Uterus (tissue), 4 donors: ENCODE measurements at regions of chr9 and their contacts with region 1.

Region 1: GRCh38 chr9:134738869-134739659 is 97.5 kb downstream of the COL5A1 start:
- DNase-seq: peak; percentile 80 to 81
- H3K4me3 ChIP-seq: no peak overlapping the region
- H3K27ac ChIP-seq: peak overlapping the region in 1 of 2 donors; percentile 41
- H3K4me1 ChIP-seq: peaks cover 0 to under 1% of the 10 kb centered on the region in 2 donors
- H3K27me3 ChIP-seq: no peaks in the 10 kb centered on the region
- CTCF ChIP-seq: peak; percentile 87 to 96 (median 92)
- POLR2A ChIP-seq: peak in 1 of 2 donors; percentile 9

Region 2: GRCh38 chr9:134455934-134456739 is 282.9 kb before region 1 on chr9:
- intact Hi-C with region 1: loop called (anchors 10 kb)
- DNase-seq: peak; percentile 92 to 95
- H3K4me3 ChIP-seq: peak overlapping the region; percentile 19 to 21
- H3K27ac ChIP-seq: peak overlapping the region; percentile 90 to 94
- H3K4me1 ChIP-seq: peaks cover 10 to 14% of the 10 kb centered on the region in 2 donors
- H3K27me3 ChIP-seq: no peaks in the 10 kb centered on the region
- CTCF ChIP-seq: peak in 1 of 4 experiments; percentile 3
- POLR2A ChIP-seq: peak; percentile 10 to 68

Region 3: DNA sequence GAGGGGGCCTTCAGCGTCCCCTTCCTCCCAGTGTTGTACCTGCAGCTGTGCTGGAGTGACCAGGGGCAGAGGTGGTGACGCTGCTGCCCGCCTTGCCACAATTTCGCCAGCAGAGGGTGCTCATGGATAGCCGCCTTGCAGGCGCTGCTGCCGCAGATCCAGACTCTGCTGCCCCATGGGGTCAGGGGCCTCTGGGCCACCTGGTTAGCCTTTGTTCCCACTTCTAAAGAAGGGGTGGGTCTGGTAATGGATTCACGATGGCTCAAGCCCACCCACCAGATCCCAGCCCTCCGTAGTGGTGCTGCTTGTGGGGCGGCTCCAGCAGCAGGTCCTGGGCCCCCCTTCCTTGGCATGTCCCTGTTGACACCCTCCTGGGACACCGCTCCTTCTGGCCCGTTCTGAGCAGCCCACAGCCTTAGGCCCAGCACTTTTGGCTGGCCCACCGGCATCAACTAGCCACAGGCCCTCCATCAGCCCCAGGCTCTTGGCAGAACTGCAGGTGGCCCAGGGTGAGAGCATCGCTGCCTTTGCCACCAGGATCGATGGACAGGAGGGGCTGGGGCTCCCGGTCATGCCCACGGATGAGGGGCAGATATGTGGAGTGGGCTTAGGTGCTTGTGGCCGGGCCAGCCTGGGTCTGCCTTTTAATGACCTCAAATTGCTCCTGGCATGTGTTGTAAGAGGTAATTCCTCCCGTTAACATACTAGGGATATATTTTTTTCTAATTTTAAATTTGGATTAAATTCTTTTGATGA is 40.3 kb before region 1 on chr9:
- intact Hi-C with region 1: loop called (anchors 5 kb)
- DNase-seq: peak; percentile 67 to 75
- H3K4me3 ChIP-seq: no peak overlapping the region
- H3K27ac ChIP-seq: peak overlapping the region; percentile 39 to 49
- H3K4me1 ChIP-seq: peaks cover 0 to 3% of the 10 kb centered on the region in 2 donors
- H3K27me3 ChIP-seq: no peaks in the 10 kb centered on the region
- CTCF ChIP-seq: peak; percentile 87 to 94 (median 92)
- POLR2A ChIP-seq: no peak

Region 4: DNA sequence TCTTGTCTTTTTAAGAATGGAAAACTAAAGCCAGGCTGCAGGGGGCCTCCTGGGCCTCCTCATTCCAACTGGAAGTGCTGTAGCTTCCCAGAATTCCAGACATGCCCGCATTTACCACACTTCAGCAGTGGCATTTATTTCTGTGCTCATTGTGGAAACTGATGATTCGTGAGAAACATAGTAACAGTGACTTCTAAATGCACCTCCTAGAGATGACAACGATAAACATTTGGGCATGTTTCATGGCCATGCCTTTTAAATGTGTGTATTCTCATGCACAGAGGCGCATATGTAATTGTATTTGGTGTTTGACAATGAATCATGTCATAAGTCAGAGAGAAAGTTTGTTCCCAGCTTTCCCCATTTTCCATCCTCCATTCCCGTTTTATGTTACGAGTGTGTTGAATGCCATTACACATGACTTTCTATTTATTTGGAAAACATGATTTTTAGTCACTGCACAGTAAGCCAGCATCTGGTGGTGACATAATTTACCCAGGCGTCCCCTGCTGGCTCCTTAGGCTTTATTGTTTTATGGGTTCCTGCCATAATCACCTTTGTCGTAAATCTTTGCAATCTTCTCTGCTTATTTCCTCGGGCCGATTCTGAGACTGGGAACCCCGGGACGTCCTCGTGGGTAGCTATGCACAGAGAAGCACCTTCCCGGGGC is 72.7 kb after region 1 on chr9:
- intact Hi-C with region 1: no loop called
- DNase-seq: no peak
- H3K4me3 ChIP-seq: no peak overlapping the region
- H3K27ac ChIP-seq: peak overlapping the region; percentile 22 to 49
- H3K4me1 ChIP-seq: no peaks in the 10 kb centered on the region
- H3K27me3 ChIP-seq: no peaks in the 10 kb centered on the region
- CTCF ChIP-seq: no peak
- POLR2A ChIP-seq: no peak